Transverse colon (tissue), 4 donors: ENCODE measurements at regions of chr15 and their contacts with region 1.

Region 1: DNA sequence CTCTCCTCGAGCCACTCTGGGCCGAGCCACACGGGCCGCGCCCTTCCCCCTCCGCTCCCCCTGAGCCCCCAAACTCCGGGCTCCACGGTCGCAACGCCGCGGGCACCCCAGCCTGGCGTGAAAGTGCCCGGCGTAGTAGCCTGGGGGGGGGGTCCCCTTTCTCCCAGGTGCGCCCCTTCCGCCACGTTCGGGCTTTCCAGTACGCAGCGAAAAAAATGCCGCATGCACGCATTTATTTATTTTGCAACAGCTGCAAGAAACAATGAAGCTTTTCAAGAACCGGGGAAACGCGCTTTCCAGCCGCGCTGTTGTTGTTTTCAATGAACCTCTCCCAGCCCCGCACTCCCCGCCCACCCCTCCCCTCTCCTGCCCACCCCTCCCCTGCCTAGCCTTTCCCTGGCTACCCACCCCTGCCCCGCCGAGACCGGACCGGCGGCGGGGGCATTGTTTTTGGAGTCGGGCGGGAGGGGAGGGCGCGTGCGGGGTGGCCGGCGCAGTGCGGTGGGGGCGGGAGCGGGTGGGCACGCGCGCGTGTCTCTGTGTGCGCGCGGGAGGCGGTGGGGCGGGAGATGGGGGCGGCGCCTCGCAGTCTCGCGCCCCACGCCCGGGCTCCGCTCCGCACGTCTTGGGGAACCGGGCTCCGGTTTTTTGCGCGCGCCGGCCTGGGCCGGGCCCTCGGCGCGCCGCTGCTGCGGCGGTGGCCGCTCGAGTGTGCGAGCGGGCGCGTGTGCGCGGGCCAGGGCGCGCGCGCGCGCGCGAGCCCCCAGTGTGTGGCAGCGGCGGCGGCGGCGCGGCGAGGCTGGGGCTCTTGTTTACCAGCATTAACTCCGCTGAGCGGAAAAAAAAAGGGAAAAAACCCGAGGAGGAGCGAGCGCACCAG is at the start of gene IGF1R:
- DNase-seq: peak; percentile 88
- H3K4me3 ChIP-seq: peak within 1 kb of the TSS; percentile 62 to 90 (median 80)
- H3K27ac ChIP-seq: peak within 1 kb of the TSS; percentile 95 to 98 (median 96)
- H3K4me1 ChIP-seq: peaks cover 7 to 28% (median 12%) of the 10 kb centered on the region in 4 donors
- H3K27me3 ChIP-seq: peaks cover 15% of the 10 kb centered on the region
- CTCF ChIP-seq: peak in 2 of 5 experiments; percentile 42
- EP300 ChIP-seq: no peak
- POLR2A ChIP-seq: no peak
- total RNA-seq, gene IGF1R: 49.4 to 239 (median 109) TPM

Region 2: GRCh38 chr15:98455965-98456364 is 192.0 kb before region 1 on chr15:
- in situ Hi-C with region 1: no loop called
- intact Hi-C with region 1: no loop called
- DNase-seq: no peak
- H3K4me3 ChIP-seq: no peak overlapping the region
- H3K27ac ChIP-seq: no peak overlapping the region
- H3K4me1 ChIP-seq: no peaks in the 10 kb centered on the region
- H3K27me3 ChIP-seq: no peaks in the 10 kb centered on the region
- CTCF ChIP-seq: no peak
- EP300 ChIP-seq: no peak
- POLR2A ChIP-seq: no peak

Region 3: DNA sequence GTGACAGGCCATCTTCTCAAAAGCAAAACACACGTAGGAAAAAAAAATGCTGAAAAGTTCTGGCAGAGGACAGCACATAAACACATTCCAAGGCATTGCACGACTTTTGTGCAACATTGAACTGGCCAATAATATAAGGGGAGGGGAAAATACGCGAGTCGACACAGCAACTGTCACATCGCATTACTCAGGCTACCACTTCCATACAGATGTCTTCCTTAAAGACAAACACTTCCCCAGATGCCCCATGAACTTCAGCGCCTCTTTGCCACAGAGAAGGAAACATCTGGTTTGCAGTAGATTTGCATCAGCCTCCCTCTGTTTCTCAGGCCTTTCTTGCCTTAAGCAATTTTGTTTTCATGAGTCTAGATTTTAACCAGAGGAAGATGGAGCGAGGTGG is 144.0 kb before region 1 on chr15:
- in situ Hi-C with region 1: no loop called
- intact Hi-C with region 1: no loop called
- DNase-seq: no peak
- H3K4me3 ChIP-seq: no peak overlapping the region
- H3K27ac ChIP-seq: no peak overlapping the region
- H3K4me1 ChIP-seq: peaks cover 0 to 3% (median 0%) of the 10 kb centered on the region in 4 donors
- H3K27me3 ChIP-seq: peaks cover 6% of the 10 kb centered on the region
- CTCF ChIP-seq: no peak
- EP300 ChIP-seq: no peak
- POLR2A ChIP-seq: no peak

Region 4: DNA sequence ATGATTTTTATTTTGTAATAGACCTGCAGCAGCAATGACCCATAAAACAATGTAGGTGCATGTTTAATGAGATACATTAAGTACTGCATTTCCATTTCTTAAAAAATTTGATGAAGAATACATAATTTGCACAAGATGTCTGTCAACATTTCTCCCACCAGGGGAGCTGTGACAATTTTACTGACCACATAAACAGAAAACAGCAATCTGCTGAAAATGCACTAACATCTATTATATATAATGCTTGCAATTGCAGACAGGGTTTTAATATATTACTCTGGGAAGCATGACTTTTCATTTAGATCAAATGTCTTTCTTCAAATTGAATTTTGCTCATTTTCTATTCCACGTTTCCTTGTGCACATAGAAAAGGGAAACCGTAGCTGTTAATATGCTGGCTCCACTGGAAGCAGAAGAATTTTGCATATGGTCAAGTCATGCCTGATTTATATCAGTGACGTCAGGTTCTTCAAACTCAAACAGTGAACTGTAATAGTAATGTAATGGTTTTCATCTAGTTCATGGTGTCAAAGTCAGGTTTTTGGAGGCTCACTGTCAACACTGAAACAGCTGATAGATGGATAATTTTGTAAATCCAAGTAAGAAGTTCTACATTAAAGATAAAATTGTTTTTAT is 79.5 kb before region 1 on chr15:
- in situ Hi-C with region 1: no loop called
- intact Hi-C with region 1: loop called (anchors 10 kb)
- DNase-seq: no peak
- H3K4me3 ChIP-seq: no peak overlapping the region
- H3K27ac ChIP-seq: no peak overlapping the region
- H3K4me1 ChIP-seq: no peaks in the 10 kb centered on the region
- H3K27me3 ChIP-seq: peaks cover 4% of the 10 kb centered on the region
- CTCF ChIP-seq: peak in 1 of 5 experiments; percentile 17
- EP300 ChIP-seq: no peak
- POLR2A ChIP-seq: no peak

Region 5: DNA sequence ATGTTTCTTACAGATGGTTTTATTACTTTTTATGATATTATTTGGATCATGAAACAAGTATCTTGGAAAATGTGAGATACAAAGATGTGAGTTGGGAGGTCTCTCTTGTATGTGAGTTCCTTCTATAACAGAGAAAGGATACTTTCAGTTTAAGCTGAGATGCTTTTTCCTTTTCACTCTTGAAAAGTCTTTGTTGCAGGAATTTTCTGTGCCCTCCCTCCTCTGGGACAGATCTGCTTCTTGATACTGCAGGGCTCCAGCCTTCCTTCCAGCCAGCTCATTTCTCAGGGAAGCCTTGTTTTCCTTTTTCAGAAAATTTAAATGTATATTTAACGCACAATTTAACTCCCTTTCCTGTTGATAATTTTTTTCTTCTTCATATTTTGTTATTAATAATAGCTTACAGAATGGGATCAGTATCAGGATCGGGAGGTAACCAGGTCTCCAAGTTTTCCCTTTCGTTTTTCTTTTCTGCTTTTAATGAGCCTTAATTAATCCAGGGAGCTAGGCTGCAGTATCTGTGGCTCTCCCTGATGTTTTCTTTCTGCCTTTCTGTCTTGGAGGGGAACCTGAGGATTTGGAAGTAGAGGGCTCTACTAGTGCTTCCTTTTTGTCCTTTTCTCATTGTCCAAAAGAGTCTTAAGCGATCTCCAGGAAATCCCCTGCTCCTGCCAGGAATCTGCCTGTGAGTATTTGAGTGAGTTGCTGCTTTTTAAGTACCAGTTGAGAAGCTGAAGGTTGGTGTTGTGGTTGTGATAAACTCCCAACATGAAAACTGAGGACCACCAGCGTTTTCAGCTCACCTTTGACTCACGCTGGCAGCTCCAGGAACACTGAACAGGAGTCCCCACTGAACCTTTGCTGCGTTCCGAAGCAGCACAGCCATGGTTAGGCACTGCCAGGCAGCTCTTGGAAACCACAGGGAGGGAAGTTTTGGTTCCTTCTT is 106.0 kb after region 1 on chr15:
- in situ Hi-C with region 1: no loop called
- intact Hi-C with region 1: no loop called
- DNase-seq: no peak
- H3K4me3 ChIP-seq: peak overlapping the region in 1 of 4 donors; percentile 7
- H3K27ac ChIP-seq: peak overlapping the region; percentile 15 to 39 (median 22)
- H3K4me1 ChIP-seq: peaks cover 0 to 21% (median 10%) of the 10 kb centered on the region in 4 donors
- H3K27me3 ChIP-seq: no peaks in the 10 kb centered on the region
- CTCF ChIP-seq: no peak
- EP300 ChIP-seq: no peak
- POLR2A ChIP-seq: no peak